ENCODE measurements at regions of chr19 and their contacts with region 1.

Region 1: DNA sequence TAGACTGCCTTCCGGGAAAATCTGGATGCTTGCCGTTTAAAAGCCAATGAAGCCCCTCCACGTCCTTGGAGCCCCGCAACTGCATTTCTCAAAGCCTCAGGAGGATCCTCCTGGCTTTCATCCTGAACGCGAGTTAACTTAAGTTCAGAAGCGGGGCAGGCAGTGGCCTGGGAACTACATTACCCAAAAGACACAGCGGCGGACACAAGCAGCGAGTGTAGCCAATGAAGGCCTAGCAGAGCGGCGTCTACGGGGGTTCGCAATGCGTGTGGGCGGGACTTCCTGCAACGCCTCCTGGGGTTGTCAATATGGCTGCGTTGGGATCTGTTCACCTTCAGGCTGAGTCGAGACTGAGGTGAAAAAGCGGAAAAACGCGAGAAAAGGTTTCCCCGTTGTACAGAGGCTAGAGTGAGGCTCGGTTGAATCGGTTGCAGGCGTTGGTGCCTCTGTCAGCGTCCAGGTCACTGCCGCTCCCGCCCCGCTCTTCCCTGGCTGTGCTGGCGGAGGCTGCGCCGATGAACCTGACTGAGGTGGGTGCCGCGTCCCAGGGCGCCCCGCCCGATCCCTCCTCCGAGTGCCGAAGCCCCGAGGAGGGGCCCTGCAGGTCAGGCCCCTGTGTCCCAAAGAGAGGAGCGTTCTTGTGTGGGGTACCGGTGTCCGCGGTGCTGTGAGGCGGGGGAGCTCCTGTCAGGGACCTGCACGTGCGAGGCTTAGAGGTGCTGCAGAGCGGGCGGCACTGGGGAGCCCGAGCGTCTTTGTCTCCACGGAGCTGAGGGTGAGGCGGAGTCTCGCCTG is at the start of gene ZNF17:
- DNase-seq: peak; percentile 96
- H3K4me3 ChIP-seq: peak within 1 kb of the TSS; percentile 60 to 99 (median 79)
- H3K27ac ChIP-seq: peak within 1 kb of the TSS; percentile 70 to 84 (median 74)
- H3K4me1 ChIP-seq: peaks cover 0 to 20% (median 16%) of the 10 kb centered on the region in 4 donors
- H3K27me3 ChIP-seq: no peaks in the 10 kb centered on the region
- CTCF ChIP-seq: no peak
- EP300 ChIP-seq: no peak
- POLR2A ChIP-seq: peak; percentile 11 to 28
- total RNA-seq, gene ZNF17: 10.2 to 14.0 (median 10.8) TPM

Region 2: GRCh38 chr19:57435062-57435978 is 24.2 kb after region 1 on chr19 and contains the start of gene ZNF749:
- intact Hi-C with region 1: loop called (anchors 2 kb)
- DNase-seq: peak; percentile 99
- H3K4me3 ChIP-seq: peak within 1 kb of the TSS; percentile 61 to 88 (median 75)
- H3K27ac ChIP-seq: peak within 1 kb of the TSS; percentile 36 to 71 (median 60)
- H3K4me1 ChIP-seq: peaks cover 0 to 23% (median 16%) of the 10 kb centered on the region in 4 donors
- H3K27me3 ChIP-seq: no peaks in the 10 kb centered on the region
- CTCF ChIP-seq: no peak
- EP300 ChIP-seq: no peak
- POLR2A ChIP-seq: no peak
- total RNA-seq, gene ZNF749: 1.9 to 7.4 (median 4.0) TPM

Measured in sigmoid colon (tissue), 7 donors.